Astrocyte of the cerebellum (primary cell): ENCODE measurements at regions of chr4 and their contacts with region 1.

Region 1: GRCh38 chr4:63541828-63542227 is 867.4 kb downstream of the TECRL start:
- DNase-seq: no peak
- H3K4me3 ChIP-seq: no peak overlapping the region
- CTCF ChIP-seq: no peak

Region 2: DNA sequence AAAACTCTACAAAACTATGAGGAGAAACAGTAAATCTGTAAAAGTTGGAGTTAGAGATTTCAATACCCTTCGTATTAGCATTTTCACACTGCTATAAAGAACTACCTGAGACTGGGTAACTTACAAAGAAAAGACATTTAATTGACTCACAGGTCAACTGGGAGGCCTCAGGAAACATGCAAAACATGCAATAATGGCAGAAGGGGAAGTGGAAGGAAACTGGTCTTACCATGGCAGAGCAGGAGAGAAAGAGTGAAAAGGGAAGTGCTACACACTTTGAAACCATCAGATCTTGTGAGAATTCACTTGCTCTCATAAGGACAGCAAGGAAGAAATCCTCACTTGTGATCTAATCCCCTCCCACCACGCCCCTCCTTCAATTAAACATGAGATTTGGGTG is 82.5 kb before region 1 on chr4:
- in situ Hi-C with region 1: loop called (anchors 5 kb)
- DNase-seq: no peak
- H3K4me3 ChIP-seq: no peak overlapping the region
- CTCF ChIP-seq: no peak

Region 3: DNA sequence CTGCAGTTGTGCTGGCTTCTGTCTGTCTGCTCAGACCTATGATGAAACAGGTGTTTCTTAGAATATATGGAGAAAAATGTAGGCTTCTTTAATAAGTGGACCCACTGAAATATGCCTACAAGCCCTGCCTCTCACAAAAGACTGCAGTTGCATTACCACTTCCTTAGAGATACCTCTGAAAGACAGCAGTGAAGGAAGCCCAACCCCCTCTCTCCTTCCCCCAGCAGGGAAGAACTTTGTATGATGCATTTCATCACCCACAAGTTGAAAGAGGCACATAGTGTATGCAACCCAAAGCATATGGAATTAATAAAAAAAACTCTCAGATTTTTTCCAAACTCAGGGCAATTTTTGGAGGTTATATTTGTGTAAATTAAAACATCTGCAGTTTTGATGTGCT is 49.3 kb before region 1 on chr4:
- in situ Hi-C with region 1: no loop called
- DNase-seq: no peak
- H3K4me3 ChIP-seq: no peak overlapping the region
- CTCF ChIP-seq: no peak